ENCODE measurements at regions of chr2 and their contacts with region 1.

Region 1: GRCh38 chr2:186328838-186329237 is 157.2 kb upstream of the ZC3H15 start:
- DNase-seq: no peak
- ATAC-seq: no peak
- H3K4me3 ChIP-seq: no peak overlapping the region
- H3K27ac ChIP-seq: no peak overlapping the region
- H3K4me1 ChIP-seq: no peaks in the 10 kb centered on the region
- H3K27me3 ChIP-seq: no peaks in the 10 kb centered on the region
- CTCF ChIP-seq: no peak

Region 2: DNA sequence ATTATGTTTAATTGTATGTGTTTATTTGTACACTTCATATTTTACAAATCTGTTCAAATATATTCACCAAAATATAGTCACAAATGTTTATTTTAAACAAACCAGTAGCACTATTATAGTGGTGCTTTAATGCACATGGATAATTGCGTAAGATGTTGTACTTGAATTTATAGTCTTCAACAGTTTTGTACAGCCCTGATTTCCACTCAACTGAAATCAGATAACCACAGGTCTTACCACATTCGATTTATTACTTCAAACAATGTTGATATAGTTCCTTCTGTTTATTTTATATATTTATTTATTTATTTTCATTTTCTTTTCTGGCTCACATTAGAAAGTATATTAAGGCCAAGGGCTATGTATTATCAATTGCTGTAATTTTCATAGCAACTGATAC is 1829.9 kb before region 1 on chr2:
- intact Hi-C with region 1: no loop called
- DNase-seq: no peak
- ATAC-seq: no peak
- H3K4me3 ChIP-seq: no peak overlapping the region
- H3K27ac ChIP-seq: no peak overlapping the region
- H3K4me1 ChIP-seq: no peaks in the 10 kb centered on the region
- H3K27me3 ChIP-seq: no peaks in the 10 kb centered on the region
- CTCF ChIP-seq: no peak

Region 3: DNA sequence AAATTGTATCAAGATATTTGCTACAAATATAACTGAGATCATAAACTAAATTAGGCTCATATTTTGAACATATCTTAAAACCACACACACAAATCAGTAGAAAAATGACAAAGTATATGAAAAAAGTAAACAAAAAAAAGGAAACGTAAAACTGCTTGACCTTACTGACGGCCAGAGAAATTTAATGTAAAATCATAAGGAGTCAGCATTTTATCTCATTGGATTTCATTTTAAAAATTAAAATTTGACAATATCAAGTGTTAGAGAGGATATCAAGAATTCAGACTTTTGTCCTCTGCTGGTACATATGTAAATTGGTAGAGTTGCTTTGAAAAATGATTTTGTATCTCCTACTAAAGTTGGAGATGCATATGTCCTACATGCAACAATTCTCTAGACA is 51.9 kb before region 1 on chr2:
- intact Hi-C with region 1: loop called in 1 of 2 experiments (anchors 2 kb)
- DNase-seq: no peak
- ATAC-seq: no peak
- H3K4me3 ChIP-seq: no peak overlapping the region
- H3K27ac ChIP-seq: no peak overlapping the region
- H3K4me1 ChIP-seq: no peaks in the 10 kb centered on the region
- H3K27me3 ChIP-seq: no peaks in the 10 kb centered on the region
- CTCF ChIP-seq: no peak